ENCODE measurements at regions of chr10 and their contacts with region 1.

Region 1: GRCh38 chr10:26881600-26882331 is 21.0 kb upstream of the ABI1 start:
- DNase-seq: peak; percentile 81
- H3K4me3 ChIP-seq: peak overlapping the region; percentile 17
- H3K27ac ChIP-seq: no peak overlapping the region
- H3K4me1 ChIP-seq: no peaks in the 10 kb centered on the region
- H3K27me3 ChIP-seq: no peaks in the 10 kb centered on the region
- CTCF ChIP-seq: peak; percentile 77

Region 2: GRCh38 chr10:26612151-26612915 is 269.4 kb before region 1 on chr10:
- CTCF ChIA-PET with region 1: no interaction called
- POLR2A ChIA-PET with region 1: no interaction called
- intact Hi-C with region 1: loop called (anchors 2 kb)
- DNase-seq: no peak
- H3K4me3 ChIP-seq: no peak overlapping the region
- H3K27ac ChIP-seq: no peak overlapping the region
- H3K4me1 ChIP-seq: no peaks in the 10 kb centered on the region
- H3K27me3 ChIP-seq: no peaks in the 10 kb centered on the region
- CTCF ChIP-seq: no peak

Region 3: GRCh38 chr10:26725837-26726727 is 155.7 kb before region 1 on chr10:
- CTCF ChIA-PET with region 1: interaction called, 19 read pairs
- POLR2A ChIA-PET with region 1: no interaction called
- intact Hi-C with region 1: loop called (anchors 2 kb)
- DNase-seq: peak; percentile 71
- H3K4me3 ChIP-seq: no peak overlapping the region
- H3K27ac ChIP-seq: no peak overlapping the region
- H3K4me1 ChIP-seq: no peaks in the 10 kb centered on the region
- H3K27me3 ChIP-seq: no peaks in the 10 kb centered on the region
- CTCF ChIP-seq: peak; percentile 90

Region 4: GRCh38 chr10:27223964-27224363 is 342.2 kb after region 1 on chr10:
- CTCF ChIA-PET with region 1: no interaction called
- POLR2A ChIA-PET with region 1: no interaction called
- intact Hi-C with region 1: no loop called
- DNase-seq: peak; percentile 41
- H3K4me3 ChIP-seq: no peak overlapping the region
- H3K27ac ChIP-seq: no peak overlapping the region
- H3K4me1 ChIP-seq: no peaks in the 10 kb centered on the region
- H3K27me3 ChIP-seq: no peaks in the 10 kb centered on the region
- CTCF ChIP-seq: peak; percentile 77

Measured in A673 (cell line).